GM12878 (cell line): ENCODE measurements at regions of chr7 and their contacts with region 1.

Region 1: GRCh38 chr7:34675749-34676374 is 17.8 kb downstream of the NPSR1 start:
- DNase-seq: peak; percentile 9
- ATAC-seq: peak; percentile 94
- H3K4me3 ChIP-seq: no peak overlapping the region
- H3K27ac ChIP-seq: no peak overlapping the region
- H3K4me1 ChIP-seq: no peaks in the 10 kb centered on the region
- H3K27me3 ChIP-seq: no peaks in the 10 kb centered on the region
- CTCF ChIP-seq: peak; percentile 60 to 70 (median 66)
- EP300 ChIP-seq: no peak
- POLR2A ChIP-seq: no peak
- RAD21 ChIP-seq: peak; percentile 55

Region 2: DNA sequence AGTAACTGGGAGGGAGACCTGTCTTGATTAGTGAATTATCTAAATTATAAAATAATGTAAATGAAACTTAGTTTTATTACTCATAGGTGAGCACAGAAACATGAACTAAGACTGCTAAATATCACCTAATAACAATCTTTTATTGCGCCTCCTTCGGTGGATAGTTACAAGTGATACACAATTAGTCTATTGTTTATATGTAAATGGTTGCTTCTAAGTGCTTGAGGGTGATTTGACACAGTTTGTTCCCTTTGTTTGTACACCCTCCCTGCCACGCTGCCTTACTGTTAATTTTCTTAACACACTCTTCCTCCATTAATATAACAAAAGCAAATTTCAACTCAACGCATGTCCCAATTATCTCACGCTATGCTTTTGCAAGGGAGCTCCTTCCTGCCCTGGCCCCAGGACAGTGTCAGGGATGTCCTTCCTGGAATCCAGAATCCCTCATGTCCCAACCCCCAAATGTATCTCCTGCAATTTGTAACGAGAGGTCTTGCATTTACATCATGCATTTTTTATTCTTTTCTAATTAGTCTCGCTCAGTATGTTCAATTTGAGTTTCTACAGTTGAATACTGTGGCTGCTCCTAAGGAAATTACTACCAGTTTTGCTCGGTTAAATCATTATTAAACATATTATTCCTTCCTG is 13.7 kb before region 1 on chr7:
- CTCF ChIA-PET with region 1: interaction called, 10 read pairs
- POLR2A ChIA-PET with region 1: no interaction called
- RAD21 ChIA-PET with region 1: interaction called, 3 read pairs
- SMC1A ChIA-PET with region 1: interaction called, 17 read pairs
- in situ Hi-C with region 1: no loop called
- intact Hi-C with region 1: no loop called
- DNase-seq: no peak
- ATAC-seq: no peak
- H3K4me3 ChIP-seq: no peak overlapping the region
- H3K27ac ChIP-seq: no peak overlapping the region
- H3K4me1 ChIP-seq: no peaks in the 10 kb centered on the region
- H3K27me3 ChIP-seq: peaks cover 0 to 2% of the 10 kb centered on the region in 2 experiments; a peak in 1 of 4 replicates
- CTCF ChIP-seq: no peak
- EP300 ChIP-seq: no peak
- POLR2A ChIP-seq: no peak
- RAD21 ChIP-seq: no peak

Region 3: GRCh38 chr7:34734771-34735170 is 58.9 kb after region 1 on chr7:
- CTCF ChIA-PET with region 1: interaction called, 15 read pairs
- POLR2A ChIA-PET with region 1: no interaction called
- RAD21 ChIA-PET with region 1: interaction called, 9 read pairs
- SMC1A ChIA-PET with region 1: interaction called, 12 read pairs
- in situ Hi-C with region 1: no loop called
- intact Hi-C with region 1: loop called (anchors 2 kb)
- DNase-seq: no peak
- ATAC-seq: peak; percentile 51
- H3K4me3 ChIP-seq: no peak overlapping the region
- H3K27ac ChIP-seq: no peak overlapping the region
- H3K4me1 ChIP-seq: no peaks in the 10 kb centered on the region
- H3K27me3 ChIP-seq: no peaks in the 10 kb centered on the region
- CTCF ChIP-seq: no peak
- EP300 ChIP-seq: no peak
- POLR2A ChIP-seq: no peak
- RAD21 ChIP-seq: no peak

Region 4: GRCh38 chr7:34759452-34760125 is 83.7 kb after region 1 on chr7:
- CTCF ChIA-PET with region 1: interaction called, 38 read pairs
- POLR2A ChIA-PET with region 1: interaction called, 5 read pairs
- RAD21 ChIA-PET with region 1: interaction called, 37 read pairs
- SMC1A ChIA-PET with region 1: interaction called, 15 read pairs
- in situ Hi-C with region 1: no loop called
- intact Hi-C with region 1: loop called (anchors 2 kb)
- DNase-seq: no peak
- ATAC-seq: no peak
- H3K4me3 ChIP-seq: no peak overlapping the region
- H3K27ac ChIP-seq: no peak overlapping the region
- H3K4me1 ChIP-seq: no peaks in the 10 kb centered on the region
- H3K27me3 ChIP-seq: no peaks in the 10 kb centered on the region
- CTCF ChIP-seq: peak; percentile 55 to 57 (median 56); a peak in 5 of 6 replicates
- EP300 ChIP-seq: no peak
- POLR2A ChIP-seq: no peak
- RAD21 ChIP-seq: peak; percentile 32; the same call in 1 of the 2 replicates

Region 5: GRCh38 chr7:34928049-34928448 is 252.2 kb after region 1 on chr7:
- CTCF ChIA-PET with region 1: interaction called, 18 read pairs
- POLR2A ChIA-PET with region 1: no interaction called
- RAD21 ChIA-PET with region 1: interaction called, 7 read pairs
- SMC1A ChIA-PET with region 1: interaction called, 22 read pairs
- in situ Hi-C with region 1: no loop called
- intact Hi-C with region 1: loop called (anchors 2 kb)
- DNase-seq: no peak
- ATAC-seq: peak; percentile 98
- H3K4me3 ChIP-seq: no peak overlapping the region
- H3K27ac ChIP-seq: no peak overlapping the region
- H3K4me1 ChIP-seq: no peaks in the 10 kb centered on the region
- H3K27me3 ChIP-seq: no peaks in the 10 kb centered on the region
- CTCF ChIP-seq: peak; percentile 59 to 64 (median 61)
- EP300 ChIP-seq: no peak
- POLR2A ChIP-seq: no peak
- RAD21 ChIP-seq: peak; percentile 44

Region 6: GRCh38 chr7:35537067-35538023 is 861.5 kb after region 1 on chr7:
- CTCF ChIA-PET with region 1: no interaction called
- POLR2A ChIA-PET with region 1: no interaction called
- RAD21 ChIA-PET with region 1: no interaction called
- SMC1A ChIA-PET with region 1: no interaction called
- in situ Hi-C with region 1: no loop called
- intact Hi-C with region 1: loop called (anchors 10 kb)
- DNase-seq: no peak
- ATAC-seq: peak; percentile 100
- H3K4me3 ChIP-seq: no peak overlapping the region
- H3K27ac ChIP-seq: no peak overlapping the region
- H3K4me1 ChIP-seq: no peaks in the 10 kb centered on the region
- H3K27me3 ChIP-seq: no peaks in the 10 kb centered on the region
- CTCF ChIP-seq: peak; percentile 94 to 96 (median 95)
- EP300 ChIP-seq: no peak
- POLR2A ChIP-seq: no peak
- RAD21 ChIP-seq: peak; percentile 76